Activated T-helper 1 cell treated with anti-CD3 and anti-CD28 coated beads, Interleukin-12 subunit alpha, Interleukin-12 subunit beta, Interleukin-2, Interleukin-4 antibody, amounts not matched to agents 30 ng/mL and 10 ng/mL and 1 ng/mL, durations not matched to agents 14 hours and 24 hours and 36 hours (primary cell): ENCODE measurements at regions of chr15 and their contacts with region 1.

Region 1: GRCh38 chr15:51829360-51830275 is at the start of gene TMOD3:
- DNase-seq: peak; percentile 88
- H3K4me3 Mint-ChIP-seq: peak within 1 kb of the TSS; percentile 98
- H3K27ac Mint-ChIP-seq: peak within 1 kb of the TSS; percentile 97
- H3K4me1 Mint-ChIP-seq: peaks cover 47% of the 10 kb centered on the region
- H3K27me3 Mint-ChIP-seq: peaks cover 2% of the 10 kb centered on the region
- total RNA-seq, gene TMOD3: 59.2 and 60.2 TPM in 2 replicates

Region 2: DNA sequence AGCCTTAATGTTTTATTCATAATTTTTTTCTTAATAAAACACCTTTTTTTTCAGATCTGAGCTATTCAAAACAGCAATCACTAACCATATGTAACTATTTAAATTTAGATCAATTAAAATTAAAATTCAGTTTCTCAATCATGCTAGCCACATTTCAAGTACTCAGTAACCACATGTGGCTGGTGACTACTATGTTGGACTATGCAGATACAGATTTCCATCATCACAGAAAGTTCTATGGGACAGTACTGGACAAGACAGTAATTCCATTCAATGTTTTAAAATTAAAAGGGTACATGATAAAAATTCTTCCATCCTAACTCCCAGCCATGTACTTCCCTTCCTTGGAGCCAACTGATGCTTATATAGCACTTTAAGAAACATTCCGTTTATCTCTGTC is 368.8 kb before region 1 on chr15:
- intact Hi-C with region 1: no loop called
- DNase-seq: no peak
- H3K4me3 Mint-ChIP-seq: no peak overlapping the region
- H3K27ac Mint-ChIP-seq: no peak overlapping the region
- H3K4me1 Mint-ChIP-seq: no peaks in the 10 kb centered on the region
- H3K27me3 Mint-ChIP-seq: no peaks in the 10 kb centered on the region

Region 3: GRCh38 chr15:51622604-51623370 is 206.8 kb before region 1 on chr15 and contains the start of gene DMXL2:
- intact Hi-C with region 1: loop called (anchors 1 kb)
- DNase-seq: peak; percentile 62
- H3K4me3 Mint-ChIP-seq: peak within 1 kb of the TSS; percentile 83
- H3K27ac Mint-ChIP-seq: peak within 1 kb of the TSS; percentile 41
- H3K4me1 Mint-ChIP-seq: peaks cover 11% of the 10 kb centered on the region
- H3K27me3 Mint-ChIP-seq: peaks cover 60% of the 10 kb centered on the region
- total RNA-seq, gene DMXL2: 2.4 and 3.8 TPM in 2 replicates

Region 4: GRCh38 chr15:51688863-51689262 is 140.8 kb before region 1 on chr15:
- intact Hi-C with region 1: no loop called
- DNase-seq: no peak
- H3K4me3 Mint-ChIP-seq: no peak overlapping the region
- H3K27ac Mint-ChIP-seq: no peak overlapping the region
- H3K4me1 Mint-ChIP-seq: peaks cover 28% of the 10 kb centered on the region
- H3K27me3 Mint-ChIP-seq: peaks cover 39% of the 10 kb centered on the region

Region 5: DNA sequence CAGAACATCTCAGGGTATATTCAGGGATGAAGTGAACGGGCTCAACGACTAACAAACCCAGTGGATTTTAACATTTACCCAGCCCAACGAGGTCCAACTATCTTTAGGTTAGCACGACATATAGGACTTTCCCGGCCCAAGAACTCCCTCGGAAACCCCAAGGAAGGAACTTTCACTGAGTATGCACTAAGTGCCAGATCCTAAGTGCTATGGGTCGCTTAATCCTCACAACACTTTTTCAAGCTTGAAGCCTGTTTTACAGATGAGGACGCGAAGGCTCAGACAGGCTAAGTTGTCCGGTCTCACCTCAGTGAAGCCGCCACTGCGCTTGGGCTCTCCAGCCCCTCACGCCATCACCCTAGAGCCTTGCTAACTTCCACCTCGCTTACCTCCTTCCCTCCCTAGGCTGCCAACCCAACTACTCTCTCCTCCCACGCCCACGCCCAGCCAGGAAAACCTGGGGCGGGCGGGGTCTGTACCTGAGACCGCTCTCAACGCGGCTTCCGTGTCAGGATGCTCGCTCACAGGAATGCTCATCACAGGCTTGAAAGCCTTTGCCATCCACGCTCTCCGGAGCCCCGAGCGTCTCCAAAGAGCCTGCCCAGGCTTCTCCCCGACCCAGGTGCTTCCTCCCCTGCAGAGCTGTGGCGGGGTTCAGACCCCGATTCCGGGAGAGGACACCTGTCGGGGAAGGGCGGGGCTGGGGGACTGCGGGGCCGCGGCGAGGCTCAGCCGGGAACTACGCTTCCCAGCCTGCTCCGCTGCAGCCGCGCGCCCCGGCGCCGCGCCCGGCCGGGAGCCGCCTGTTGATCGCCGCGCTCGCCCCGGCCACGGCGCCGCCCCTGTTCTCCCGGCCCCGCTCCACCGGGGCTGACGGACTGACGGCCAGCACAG is 78.6 kb before region 1 on chr15 and contains the start of gene TMOD2:
- intact Hi-C with region 1: loop called (anchors 5 kb)
- DNase-seq: peak; percentile 29
- H3K4me3 Mint-ChIP-seq: peak within 1 kb of the TSS; percentile 85
- H3K27ac Mint-ChIP-seq: no peak within 1 kb of the TSS
- H3K4me1 Mint-ChIP-seq: peaks cover 38% of the 10 kb centered on the region
- H3K27me3 Mint-ChIP-seq: peaks cover 41% of the 10 kb centered on the region
- total RNA-seq, gene TMOD2: 4.1 and 4.5 TPM in 2 replicates

Region 6: DNA sequence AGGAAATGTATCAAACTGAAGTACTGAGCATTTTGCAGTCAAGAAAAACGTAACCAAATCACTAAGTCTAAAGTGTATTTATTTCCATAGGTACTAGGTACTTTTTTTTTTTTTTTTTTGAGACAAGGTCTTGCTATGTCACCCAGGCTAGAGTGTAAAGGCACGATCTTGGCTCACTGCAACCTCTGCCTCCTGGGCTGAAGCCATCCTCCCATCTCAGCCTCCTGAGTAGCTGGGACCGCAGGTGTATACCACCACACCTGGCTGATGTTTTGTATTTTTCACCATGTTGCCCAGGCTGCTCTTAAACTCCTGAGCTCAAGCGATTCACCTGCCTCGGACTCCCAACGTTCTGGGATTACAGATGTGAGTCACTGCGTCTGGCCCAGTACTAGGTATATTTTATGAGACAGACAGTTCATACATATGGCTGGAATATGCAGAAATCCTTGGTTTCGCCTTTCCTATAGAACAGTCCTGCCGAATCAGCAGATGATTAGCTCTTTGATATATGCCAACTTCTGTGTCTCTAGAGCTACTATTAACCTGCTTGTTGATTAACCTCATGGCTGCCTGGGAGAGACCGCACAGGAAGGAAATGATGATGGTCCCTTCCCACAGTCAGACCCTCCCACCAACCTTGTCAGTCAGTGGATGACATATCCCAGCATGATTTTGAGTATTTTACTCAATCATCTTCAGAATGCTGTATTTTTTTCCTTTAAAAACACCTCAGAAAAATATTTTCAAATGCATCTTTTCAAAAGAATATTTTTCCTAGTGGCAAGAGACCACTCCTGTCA is 32.1 kb after region 1 on chr15:
- intact Hi-C with region 1: loop called (anchors 1 kb)
- DNase-seq: peak; percentile 33
- H3K4me3 Mint-ChIP-seq: peak overlapping the region; percentile 50
- H3K27ac Mint-ChIP-seq: peak overlapping the region; percentile 67
- H3K4me1 Mint-ChIP-seq: peaks cover 57% of the 10 kb centered on the region
- H3K27me3 Mint-ChIP-seq: no peaks in the 10 kb centered on the region

Region 7: GRCh38 chr15:52005748-52006701 is 176.4 kb after region 1 on chr15:
- intact Hi-C with region 1: loop called (anchors 5 kb)
- DNase-seq: no peak
- H3K4me3 Mint-ChIP-seq: peak overlapping the region; percentile 28
- H3K27ac Mint-ChIP-seq: peak overlapping the region; percentile 80
- H3K4me1 Mint-ChIP-seq: peaks cover 70% of the 10 kb centered on the region
- H3K27me3 Mint-ChIP-seq: no peaks in the 10 kb centered on the region